Activated T-helper 2 cell treated with anti-CD3 and anti-CD28 coated beads, Interferon-gamma antibody, Interleukin-2, Interleukin-4, amounts not matched to agents 10 μg/mL and 5 μg/mL and 100 μg/mL, durations not matched to agents 14 hours and 24 hours and 36 hours (primary cell): ENCODE measurements at regions of chr16 and their contacts with region 1.

Region 1: DNA sequence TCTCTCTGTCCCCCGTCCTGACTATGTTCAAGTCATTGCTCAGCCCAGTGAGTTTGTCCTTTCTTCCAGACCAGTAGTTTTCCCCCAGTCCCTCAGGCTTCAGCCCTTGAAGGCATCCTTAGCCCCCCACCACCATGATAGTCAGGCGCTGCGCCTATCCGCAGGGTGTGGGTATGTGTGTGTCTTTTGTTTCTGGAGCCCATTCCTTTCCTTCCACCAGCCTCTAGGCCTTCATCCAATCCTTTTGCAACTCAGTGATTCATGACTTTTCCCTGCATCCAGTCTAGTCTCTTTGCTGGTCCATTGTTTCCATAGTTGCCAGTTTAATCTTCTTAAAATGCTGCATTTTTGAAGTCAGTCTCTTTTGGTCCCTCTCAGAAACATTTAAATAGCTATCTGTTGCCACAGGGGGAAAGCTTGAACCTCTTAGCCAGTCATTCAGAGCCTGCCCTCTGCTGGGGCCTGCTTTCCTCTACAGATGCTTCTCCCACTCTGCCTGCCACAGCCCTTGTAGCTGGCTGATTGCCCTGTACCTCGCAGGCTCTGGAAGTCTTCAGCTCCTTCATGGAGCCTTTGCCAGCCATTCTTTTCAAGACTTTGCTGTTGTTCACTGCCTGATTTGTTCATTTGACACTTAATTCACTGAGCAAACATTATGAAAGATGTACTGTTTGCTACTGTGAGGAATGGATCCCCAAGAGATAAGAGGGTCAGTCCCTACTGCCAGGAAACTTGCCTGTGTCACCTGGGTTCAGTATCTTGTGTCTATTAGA is 55.9 kb upstream of the ADCY7 start:
- DNase-seq: peak; percentile 50
- H3K4me3 Mint-ChIP-seq: no peak overlapping the region
- H3K27ac Mint-ChIP-seq: no peak overlapping the region
- H3K4me1 Mint-ChIP-seq: peaks cover 21% of the 10 kb centered on the region
- H3K27me3 Mint-ChIP-seq: no peaks in the 10 kb centered on the region

Region 2: DNA sequence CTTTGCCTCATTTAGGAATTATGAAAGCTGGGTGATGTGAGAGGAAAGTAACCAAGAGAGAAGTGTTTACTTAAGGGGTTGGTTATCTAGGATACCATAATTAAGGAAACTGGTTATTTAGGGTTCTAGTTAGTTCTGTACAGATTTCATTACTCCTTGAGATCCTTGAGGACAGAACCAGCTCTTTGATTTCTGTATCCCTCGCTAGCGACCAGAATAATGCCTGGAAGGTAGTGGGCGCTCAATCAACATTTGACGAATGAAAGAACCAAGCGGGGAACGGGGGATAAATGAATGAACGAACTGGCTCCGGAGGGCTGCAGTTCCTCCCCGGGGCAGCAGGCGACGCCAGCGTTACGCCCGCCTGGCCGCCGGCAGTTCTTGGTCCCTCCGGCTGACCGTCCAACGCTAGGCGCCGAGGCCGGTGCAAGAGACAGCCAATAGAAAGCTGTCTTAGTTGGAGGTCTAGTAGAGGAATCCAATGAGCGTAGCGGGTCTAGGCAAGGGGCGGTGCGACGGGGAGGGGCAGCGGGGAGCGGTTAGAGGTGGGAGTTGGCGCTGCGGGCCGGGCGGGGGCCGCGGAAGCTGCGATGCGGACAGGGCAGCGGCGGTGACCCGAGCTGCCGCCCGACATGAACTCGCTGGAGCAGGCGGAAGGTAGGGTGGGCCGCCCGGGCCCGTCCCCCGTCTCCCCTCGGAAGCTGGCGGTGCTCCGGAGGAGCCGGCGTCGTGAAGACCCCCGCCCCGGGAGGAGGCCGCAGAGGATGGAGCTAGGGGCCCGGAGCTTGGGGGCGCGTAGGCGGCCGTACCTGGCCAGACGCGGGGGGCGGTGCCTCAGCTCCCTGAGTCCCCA is 185.5 kb before region 1 on chr16 and contains the start of gene CNEP1R1:
- intact Hi-C with region 1: loop called (anchors 1 kb)
- DNase-seq: peak; percentile 93
- H3K4me3 Mint-ChIP-seq: peak within 1 kb of the TSS; percentile 95
- H3K27ac Mint-ChIP-seq: peak within 1 kb of the TSS; percentile 84
- H3K4me1 Mint-ChIP-seq: peaks cover 18% of the 10 kb centered on the region
- H3K27me3 Mint-ChIP-seq: peaks cover 4% of the 10 kb centered on the region
- total RNA-seq, gene CNEP1R1: 23.4 and 26.1 TPM in 2 replicates

Region 3: DNA sequence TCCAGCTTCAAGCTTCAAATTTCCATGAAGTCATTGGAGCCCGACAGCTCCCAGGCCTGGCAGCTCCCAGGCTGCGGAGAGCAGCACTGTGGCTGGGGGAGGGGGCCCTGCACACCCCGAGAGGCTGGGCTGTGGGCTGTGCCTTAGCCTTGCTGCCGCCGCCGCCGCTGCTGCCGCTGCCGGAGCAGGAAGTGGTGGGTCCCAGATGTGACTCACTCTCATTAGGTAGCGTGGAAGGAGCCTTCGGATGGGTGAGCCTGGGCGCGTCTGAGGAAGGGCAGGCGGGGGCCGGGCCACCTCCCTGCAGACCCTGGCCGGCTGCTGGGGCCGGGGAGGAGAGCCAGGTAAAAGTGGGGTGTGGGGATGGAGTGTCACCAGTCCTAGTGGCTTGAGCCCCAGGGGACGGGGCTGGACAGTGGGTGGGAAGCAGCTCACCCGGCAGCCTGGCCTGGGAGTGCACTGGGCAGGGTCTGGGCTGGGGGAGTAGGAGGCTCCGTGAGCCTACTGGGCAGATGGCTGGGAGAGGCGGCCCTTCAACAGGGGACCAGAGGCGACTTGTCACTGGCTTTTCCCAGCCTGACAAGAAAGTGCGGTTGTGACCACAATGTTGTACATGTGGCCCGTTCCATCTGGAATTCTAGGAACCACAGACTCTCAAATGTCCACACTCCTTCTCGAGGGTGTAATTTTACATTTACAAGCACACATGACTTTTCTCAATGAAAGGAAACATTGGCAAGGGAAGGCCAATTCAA is 56.1 kb after region 1 on chr16 and contains the start of gene ADCY7:
- intact Hi-C with region 1: loop called (anchors 5 kb)
- DNase-seq: peak; percentile 77
- H3K4me3 Mint-ChIP-seq: peak within 1 kb of the TSS; percentile 91
- H3K27ac Mint-ChIP-seq: peak within 1 kb of the TSS; percentile 92
- H3K4me1 Mint-ChIP-seq: peaks cover 47% of the 10 kb centered on the region
- H3K27me3 Mint-ChIP-seq: no peaks in the 10 kb centered on the region
- total RNA-seq, gene ADCY7: 78.7 and 89.5 TPM in 2 replicates

Region 4: DNA sequence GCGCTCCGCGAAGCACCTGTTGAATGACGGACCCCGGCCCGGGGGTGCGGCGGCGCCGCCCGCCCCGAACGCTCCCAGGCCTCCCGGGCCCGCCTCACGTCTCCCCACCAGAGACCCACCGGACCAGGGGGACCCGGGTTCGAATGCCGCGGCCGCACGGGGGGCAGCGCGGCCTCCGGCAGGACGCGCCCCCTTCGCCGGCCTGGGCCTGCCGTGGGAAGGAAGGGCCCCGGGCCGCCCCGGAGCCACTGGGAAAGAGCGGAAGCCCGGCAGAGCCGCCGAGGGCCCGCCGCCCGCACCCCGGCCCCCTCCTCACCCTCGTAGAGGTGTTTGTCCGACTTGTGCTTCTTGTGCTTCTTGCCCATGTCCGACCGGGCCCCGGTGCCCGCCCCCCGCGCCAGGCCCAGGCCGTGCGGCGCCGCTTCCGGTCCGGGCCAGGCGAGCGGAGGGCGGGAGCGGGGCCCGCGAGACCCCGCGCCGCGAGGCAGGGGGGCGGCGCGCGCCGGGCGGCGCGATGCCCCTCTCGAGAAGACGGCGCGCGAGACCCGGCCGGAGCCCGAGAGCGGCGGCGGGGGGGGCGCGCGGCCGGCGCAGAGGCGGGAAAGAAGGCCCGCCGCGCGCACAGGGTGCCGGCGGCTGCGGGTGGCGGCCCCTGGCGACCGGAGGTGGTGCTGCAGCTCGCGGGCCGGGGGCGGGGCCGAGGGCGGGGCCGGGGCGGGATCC is 158.1 kb after region 1 on chr16 and contains the start of gene BRD7:
- intact Hi-C with region 1: loop called (anchors 5 kb)
- DNase-seq: peak; percentile 59
- H3K4me3 Mint-ChIP-seq: peak within 1 kb of the TSS; percentile 99
- H3K27ac Mint-ChIP-seq: peak within 1 kb of the TSS; percentile 94
- H3K4me1 Mint-ChIP-seq: peaks cover 40% of the 10 kb centered on the region
- H3K27me3 Mint-ChIP-seq: no peaks in the 10 kb centered on the region
- total RNA-seq, gene BRD7: 76.0 and 79.5 TPM in 2 replicates

Region 5: GRCh38 chr16:50437769-50438437 is 227.5 kb after region 1 on chr16:
- intact Hi-C with region 1: no loop called
- DNase-seq: no peak
- H3K4me3 Mint-ChIP-seq: no peak overlapping the region
- H3K27ac Mint-ChIP-seq: no peak overlapping the region
- H3K4me1 Mint-ChIP-seq: no peaks in the 10 kb centered on the region
- H3K27me3 Mint-ChIP-seq: peaks cover 13% of the 10 kb centered on the region

Region 6: DNA sequence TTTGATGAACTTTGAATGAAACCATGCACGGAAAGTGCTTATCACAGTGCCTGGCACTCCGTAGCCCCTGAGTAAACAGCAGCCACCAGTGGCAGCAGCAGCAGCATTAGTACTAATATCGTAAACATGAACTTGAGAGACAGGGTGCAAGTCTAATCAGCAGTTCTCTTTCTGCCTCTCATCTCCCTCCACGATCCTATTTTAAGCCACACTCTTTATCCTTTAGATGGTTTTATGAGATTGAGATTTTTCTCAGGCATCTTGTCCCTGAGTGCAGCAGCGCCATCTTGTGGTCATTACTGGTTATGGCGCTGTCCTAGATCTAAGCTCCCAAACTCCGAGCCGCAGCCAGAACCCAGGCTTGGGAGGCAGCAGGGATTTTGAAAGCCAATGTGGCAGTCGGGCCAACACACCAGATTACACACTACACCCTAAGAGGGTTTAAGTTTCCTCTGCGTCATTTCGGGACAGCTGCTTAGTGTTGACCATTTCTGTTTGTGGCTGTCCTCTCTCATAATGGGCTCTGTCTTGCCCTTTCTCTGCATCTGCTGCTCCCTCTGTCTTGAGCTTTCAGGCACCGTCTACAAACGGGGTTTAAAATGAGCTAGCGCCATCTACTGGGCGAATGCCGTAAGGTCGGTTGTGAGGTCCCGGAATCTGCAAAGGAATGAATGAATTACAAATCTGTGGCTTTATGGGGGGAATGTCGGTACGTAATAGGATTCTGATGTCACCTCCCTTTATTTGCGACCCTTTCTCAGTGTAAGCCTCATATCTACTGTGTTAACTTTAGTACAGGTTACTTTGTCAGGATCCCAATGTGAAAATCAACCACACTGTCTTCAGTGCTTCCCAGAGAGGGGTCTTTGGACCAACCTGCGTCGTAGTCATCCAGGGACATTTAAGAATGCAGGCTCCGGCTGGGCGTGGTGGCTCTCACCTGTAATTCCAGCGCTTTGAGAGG is 595.9 kb after region 1 on chr16:
- intact Hi-C with region 1: loop called (anchors 5 kb)
- DNase-seq: peak; percentile 78
- H3K4me3 Mint-ChIP-seq: peak overlapping the region; percentile 68
- H3K27ac Mint-ChIP-seq: peak overlapping the region; percentile 47
- H3K4me1 Mint-ChIP-seq: peaks cover 12% of the 10 kb centered on the region
- H3K27me3 Mint-ChIP-seq: peaks cover 2% of the 10 kb centered on the region